Heart left ventricle (tissue), 16 donors: ENCODE measurements at regions of chr5 and their contacts with region 1.

Region 1: GRCh38 chr5:36552626-36553393 is 53.6 kb upstream of the SLC1A3 start:
- DNase-seq: peak in 4 of 5 donors; percentile 45 to 69 (median 52)
- ATAC-seq: peak; percentile 67 to 96 (median 92)
- H3K4me3 ChIP-seq: no peak overlapping the region
- H3K27ac ChIP-seq: peak overlapping the region in 7 of 12 donors; percentile 26 to 51 (median 36)
- H3K4me1 ChIP-seq: peaks cover 0 to 5% (median 0%) of the 10 kb centered on the region in 12 donors
- H3K27me3 ChIP-seq: no peaks in the 10 kb centered on the region
- CTCF ChIP-seq: no peak
- POLR2A ChIP-seq: no peak

Region 2: DNA sequence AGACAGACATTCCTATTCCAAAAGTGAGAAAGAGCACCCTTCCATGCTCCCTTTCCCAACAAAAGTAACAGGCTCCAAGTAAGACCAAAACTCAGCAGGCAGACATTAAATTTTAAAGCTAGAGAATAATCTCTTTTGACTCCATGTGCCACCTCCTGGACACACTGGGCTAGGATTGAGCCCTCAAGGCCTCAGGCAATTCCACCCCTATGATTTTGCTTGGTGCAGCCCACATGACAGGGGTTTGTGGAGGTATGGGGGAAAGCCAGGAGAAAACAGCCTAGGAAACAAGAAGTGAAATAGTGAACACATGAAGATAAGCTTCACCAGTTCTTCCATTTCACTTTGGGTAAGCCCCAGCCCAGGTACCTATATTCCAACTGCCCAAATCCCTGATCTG is 609.7 kb before region 1 on chr5:
- intact Hi-C with region 1: no loop called
- DNase-seq: no peak
- ATAC-seq: no peak
- H3K4me3 ChIP-seq: no peak overlapping the region
- H3K27ac ChIP-seq: no peak overlapping the region
- H3K4me1 ChIP-seq: no peaks in the 10 kb centered on the region
- H3K27me3 ChIP-seq: peaks cover 0 to 2% (median 0%) of the 10 kb centered on the region in 9 donors
- CTCF ChIP-seq: no peak
- POLR2A ChIP-seq: no peak

Region 3: GRCh38 chr5:36570301-36571095 is 17.7 kb after region 1 on chr5:
- intact Hi-C with region 1: loop called in 1 of 10 experiments (anchors 2 kb)
- DNase-seq: peak in 4 of 5 donors; percentile 18 to 31 (median 28)
- ATAC-seq: peak; percentile 84 to 91 (median 88)
- H3K4me3 ChIP-seq: no peak overlapping the region
- H3K27ac ChIP-seq: peak overlapping the region; percentile 12 to 86 (median 63)
- H3K4me1 ChIP-seq: peaks cover 0 to 35% (median 18%) of the 10 kb centered on the region in 12 donors
- H3K27me3 ChIP-seq: no peaks in the 10 kb centered on the region
- CTCF ChIP-seq: no peak
- POLR2A ChIP-seq: no peak